ENCODE measurements at regions of chr3 and their contacts with region 1.

Region 1: GRCh38 chr3:121809249-121809648 is 25.6 kb downstream of the IQCB1 start:
- DNase-seq: peak; percentile 84
- ATAC-seq: peak; percentile 99
- H3K4me3 ChIP-seq: no peak overlapping the region
- H3K27ac ChIP-seq: peak overlapping the region; percentile 81
- H3K4me1 ChIP-seq: peaks cover 26% of the 10 kb centered on the region
- H3K27me3 ChIP-seq: no peaks in the 10 kb centered on the region
- CTCF ChIP-seq: no peak
- EP300 ChIP-seq: peak; percentile 75 to 87
- POLR2A ChIP-seq: no peak
- RAD21 ChIP-seq: no peak

Region 2: GRCh38 chr3:121793078-121793477 is 16.2 kb before region 1 on chr3:
- CTCF ChIA-PET with region 1: interaction called, 16 read pairs
- POLR2A ChIA-PET with region 1: interaction called, 9 read pairs
- RAD21 ChIA-PET with region 1: interaction called, 51 read pairs
- SMC1A ChIA-PET with region 1: interaction called, 72 read pairs
- in situ Hi-C with region 1: no loop called
- intact Hi-C with region 1: no loop called
- DNase-seq: no peak
- ATAC-seq: peak; percentile 69
- H3K4me3 ChIP-seq: peak overlapping the region; percentile 42
- H3K27ac ChIP-seq: peak overlapping the region; percentile 66
- H3K4me1 ChIP-seq: peaks cover 29% of the 10 kb centered on the region
- H3K27me3 ChIP-seq: no peaks in the 10 kb centered on the region
- CTCF ChIP-seq: no peak
- EP300 ChIP-seq: 0 out of 4 replicates have a peak, but pooled peaks of 1 of the 2 experiments have one; percentile 12
- POLR2A ChIP-seq: no peak
- RAD21 ChIP-seq: no peak